Activated naive CD4-positive, alpha-beta T cell treated with anti-CD3 and anti-CD28 coated beads for 36 hours (primary cell): ENCODE measurements at regions of chr17 and their contacts with region 1.

Region 1: GRCh38 chr17:14321476-14321949 is 20.6 kb downstream of the HS3ST3B1 start:
- DNase-seq: no peak
- H3K4me3 Mint-ChIP-seq: no peak overlapping the region
- H3K27ac Mint-ChIP-seq: peak overlapping the region; percentile 73
- H3K4me1 Mint-ChIP-seq: peaks cover 82% of the 10 kb centered on the region
- H3K27me3 Mint-ChIP-seq: no peaks in the 10 kb centered on the region

Region 2: GRCh38 chr17:14308965-14309879 is 12.3 kb before region 1 on chr17:
- CTCF ChIA-PET with region 1: interaction called, 5 read pairs
- intact Hi-C with region 1: loop called (anchors 1 kb)
- DNase-seq: peak; percentile 91
- H3K4me3 Mint-ChIP-seq: peak overlapping the region; percentile 72
- H3K27ac Mint-ChIP-seq: peak overlapping the region; percentile 8
- H3K4me1 Mint-ChIP-seq: peaks cover 69% of the 10 kb centered on the region
- H3K27me3 Mint-ChIP-seq: no peaks in the 10 kb centered on the region

Region 3: GRCh38 chr17:14701886-14702285 is 380.4 kb after region 1 on chr17:
- CTCF ChIA-PET with region 1: no interaction called
- intact Hi-C with region 1: no loop called
- DNase-seq: no peak
- H3K4me3 Mint-ChIP-seq: no peak overlapping the region
- H3K27ac Mint-ChIP-seq: no peak overlapping the region
- H3K4me1 Mint-ChIP-seq: no peaks in the 10 kb centered on the region
- H3K27me3 Mint-ChIP-seq: no peaks in the 10 kb centered on the region